PC-9 (cell line): ENCODE measurements at regions of chr1 and their contacts with region 1.

Region 1: GRCh38 chr1:31470794-31471340 is 57.9 kb downstream of the SERINC2 start:
- DNase-seq: peak; percentile 10 to 49
- H3K4me3 ChIP-seq: peak overlapping the region; percentile 43; the same call in 1 of the 2 replicates
- H3K27ac ChIP-seq: peak overlapping the region; percentile 97
- H3K4me1 ChIP-seq: peaks cover 26% of the 10 kb centered on the region
- H3K27me3 ChIP-seq: no peaks in the 10 kb centered on the region
- CTCF ChIP-seq: no peak

Region 2: GRCh38 chr1:31483012-31483946 is 12.4 kb after region 1 on chr1:
- CTCF ChIA-PET with region 1: no interaction called
- POLR2A ChIA-PET with region 1: no interaction called
- intact Hi-C with region 1: loop called (anchors 1 kb)
- DNase-seq: peak; percentile 53 to 94
- H3K4me3 ChIP-seq: no peak overlapping the region
- H3K27ac ChIP-seq: peak overlapping the region; percentile 50
- H3K4me1 ChIP-seq: peaks cover 19% of the 10 kb centered on the region
- H3K27me3 ChIP-seq: no peaks in the 10 kb centered on the region
- CTCF ChIP-seq: no peak

Region 3: GRCh38 chr1:31617917-31618660 is 147.2 kb after region 1 on chr1:
- CTCF ChIA-PET with region 1: no interaction called
- POLR2A ChIA-PET with region 1: no interaction called
- intact Hi-C with region 1: no loop called
- DNase-seq: peak in 1 of 2 experiments; percentile 43
- H3K4me3 ChIP-seq: peak overlapping the region; percentile 75
- H3K27ac ChIP-seq: no peak overlapping the region
- H3K4me1 ChIP-seq: no peaks in the 10 kb centered on the region
- H3K27me3 ChIP-seq: no peaks in the 10 kb centered on the region
- CTCF ChIP-seq: peak; percentile 98